ENCODE measurements at regions of chr15 and their contacts with region 1.

Region 1: GRCh38 chr15:51782357-51782896 is 31.0 kb downstream of the TMOD2 start:
- DNase-seq: no peak
- H3K4me3 ChIP-seq: no peak overlapping the region
- H3K27ac ChIP-seq: no peak overlapping the region
- H3K4me1 ChIP-seq: peaks cover 10% of the 10 kb centered on the region
- H3K27me3 ChIP-seq: no peaks in the 10 kb centered on the region
- CTCF ChIP-seq: peak; percentile 50 to 60

Region 2: DNA sequence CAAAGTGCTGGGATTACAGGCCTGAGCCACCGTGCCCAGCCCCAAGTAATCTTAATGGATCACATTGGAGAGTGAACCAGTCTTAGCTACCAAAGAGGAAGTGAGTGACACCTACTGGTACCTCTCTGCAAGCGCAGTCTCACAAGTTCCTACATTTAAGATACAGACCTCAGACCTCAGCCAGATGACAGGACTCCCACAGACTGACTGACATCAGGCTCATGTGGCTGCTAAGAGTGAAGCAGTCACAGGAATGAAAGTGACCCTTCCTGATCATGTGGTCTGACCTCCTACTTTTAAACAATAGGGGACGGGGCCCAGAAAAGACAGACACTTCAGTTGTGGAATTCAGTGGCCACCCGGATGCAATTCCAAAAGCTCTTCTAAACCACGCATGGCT is 445.0 kb after region 1 on chr15:
- CTCF ChIA-PET with region 1: no interaction called
- dilution Hi-C with region 1: no loop called
- in situ Hi-C with region 1: no loop called
- intact Hi-C with region 1: loop called (anchors 2 kb)
- DNase-seq: peak; percentile 71
- H3K4me3 ChIP-seq: no peak overlapping the region
- H3K27ac ChIP-seq: no peak overlapping the region
- H3K4me1 ChIP-seq: peaks cover 3% of the 10 kb centered on the region
- H3K27me3 ChIP-seq: no peaks in the 10 kb centered on the region
- CTCF ChIP-seq: peak; percentile 78 to 87

Measured in mammary epithelial cell (primary cell).